ENCODE measurements at regions of chr1 and their contacts with region 1.

Region 1: GRCh38 chr1:85344256-85344694 is 67.8 kb upstream of the BCL10 start:
- DNase-seq: peak; percentile 63
- ATAC-seq: peak; percentile 78
- H3K4me3 ChIP-seq: no peak overlapping the region
- H3K27ac ChIP-seq: peak overlapping the region; percentile 71
- H3K4me1 ChIP-seq: peaks cover 57% of the 10 kb centered on the region
- H3K27me3 ChIP-seq: no peaks in the 10 kb centered on the region
- CTCF ChIP-seq: peak; percentile 85

Region 2: DNA sequence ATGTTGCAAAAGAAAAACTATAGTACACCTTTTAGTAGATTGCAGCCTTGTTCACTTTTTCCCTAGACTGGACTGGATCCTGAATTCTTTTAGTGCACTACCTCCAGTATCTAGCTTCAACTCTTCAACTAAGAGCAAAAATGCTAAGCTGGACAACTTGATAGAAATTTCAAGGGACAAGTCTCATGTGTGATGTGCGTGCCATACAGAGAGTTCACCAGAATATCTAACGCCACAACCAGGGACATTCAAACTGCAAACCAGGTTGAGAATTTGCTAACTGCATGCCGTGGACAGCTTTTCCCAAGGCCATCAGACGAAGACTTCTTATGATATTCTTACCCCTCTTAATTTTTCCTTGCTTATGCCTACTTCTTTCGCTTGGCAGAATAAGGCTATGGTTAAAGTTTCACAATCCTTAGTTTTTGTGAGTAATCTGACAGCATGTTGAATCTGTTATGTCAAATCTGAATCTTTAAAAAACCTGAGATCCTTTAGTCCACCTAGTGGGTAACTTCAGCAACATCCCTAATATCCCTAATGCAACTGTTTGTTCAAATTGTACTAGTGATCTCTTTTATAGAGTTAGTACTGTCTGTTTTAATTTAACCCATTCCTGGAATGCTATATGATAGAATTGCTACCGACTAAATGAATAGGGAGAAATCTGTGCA is 54.3 kb after region 1 on chr1:
- CTCF ChIA-PET with region 1: interaction called, 9 read pairs
- POLR2A ChIA-PET with region 1: interaction called, 5 read pairs
- intact Hi-C with region 1: loop called (anchors 1 kb)
- DNase-seq: peak; percentile 72
- ATAC-seq: peak; percentile 81
- H3K4me3 ChIP-seq: no peak overlapping the region
- H3K27ac ChIP-seq: no peak overlapping the region
- H3K4me1 ChIP-seq: peaks cover 18% of the 10 kb centered on the region; the same call in 1 of the 2 replicates
- H3K27me3 ChIP-seq: no peaks in the 10 kb centered on the region
- CTCF ChIP-seq: peak; percentile 77

Measured in PC-3 (cell line).